ENCODE measurements at regions of chr17 and their contacts with region 1.

Region 1: DNA sequence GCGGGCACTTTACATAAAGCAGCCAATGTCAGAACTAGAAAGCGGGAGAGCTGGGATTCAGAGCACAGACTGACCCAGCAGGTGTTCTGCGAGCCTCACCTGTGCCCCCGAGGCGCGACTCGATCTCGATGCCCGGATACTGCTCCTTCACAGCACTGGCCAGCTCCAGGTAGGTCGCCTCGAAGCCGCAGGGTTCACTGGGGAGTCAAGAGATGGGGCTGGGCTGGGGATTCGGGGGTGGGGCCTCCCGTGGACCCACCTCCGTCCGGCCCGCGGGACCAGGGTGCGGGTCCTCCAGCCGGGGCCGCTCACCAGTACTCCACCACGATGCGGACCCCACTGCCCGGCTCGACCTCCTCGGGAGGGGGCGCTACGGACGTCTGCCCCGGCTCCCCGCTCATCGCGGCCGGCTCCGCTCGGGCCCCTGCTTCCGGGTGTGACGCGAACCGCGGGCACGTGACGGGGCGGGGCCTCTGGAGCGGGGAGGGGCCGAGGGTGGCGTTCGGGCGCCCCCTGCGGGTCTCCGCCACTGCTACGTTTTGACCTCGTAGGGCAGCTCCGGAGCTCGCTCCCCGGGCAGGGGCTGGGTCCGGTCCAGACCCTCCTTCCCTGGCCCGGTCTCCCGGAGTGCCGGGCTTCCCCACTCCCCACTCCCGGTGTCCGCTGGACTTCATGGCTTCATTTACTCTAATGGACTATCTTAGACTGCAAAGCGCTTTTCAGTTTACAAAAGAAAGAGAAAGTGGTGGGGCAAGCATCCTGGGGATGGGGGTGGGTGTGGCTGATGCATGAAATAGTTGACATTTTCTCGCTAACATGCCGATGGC is at the start of gene MIEN1:
- DNase-seq: peak; percentile 95
- H3K4me3 Mint-ChIP-seq: peak within 1 kb of the TSS; percentile 88
- H3K27ac Mint-ChIP-seq: peak within 1 kb of the TSS; percentile 83
- H3K4me1 Mint-ChIP-seq: peaks cover 19% of the 10 kb centered on the region
- H3K27me3 Mint-ChIP-seq: peaks cover 5% of the 10 kb centered on the region
- total RNA-seq, gene MIEN1: 40.1 to 45.1 TPM

Region 2: GRCh38 chr17:39533899-39534298 is 196.4 kb before region 1 on chr17:
- CTCF ChIA-PET with region 1: no interaction called
- POLR2A ChIA-PET with region 1: no interaction called
- DNase-seq: no peak
- H3K4me3 Mint-ChIP-seq: no peak overlapping the region
- H3K27ac Mint-ChIP-seq: no peak overlapping the region
- H3K4me1 Mint-ChIP-seq: peaks cover 20% of the 10 kb centered on the region
- H3K27me3 Mint-ChIP-seq: no peaks in the 10 kb centered on the region

Region 3: GRCh38 chr17:39606434-39607056 is 123.8 kb before region 1 on chr17:
- CTCF ChIA-PET with region 1: no interaction called
- POLR2A ChIA-PET with region 1: no interaction called
- DNase-seq: no peak
- H3K4me3 Mint-ChIP-seq: no peak overlapping the region
- H3K27ac Mint-ChIP-seq: no peak overlapping the region
- H3K4me1 Mint-ChIP-seq: peaks cover 12% of the 10 kb centered on the region
- H3K27me3 Mint-ChIP-seq: peaks cover 72% of the 10 kb centered on the region

Region 4: GRCh38 chr17:39653662-39654331 is 76.5 kb before region 1 on chr17:
- CTCF ChIA-PET with region 1: interaction called, 15 read pairs
- POLR2A ChIA-PET with region 1: interaction called, 10 read pairs
- DNase-seq: peak; percentile 85
- H3K4me3 Mint-ChIP-seq: no peak overlapping the region
- H3K27ac Mint-ChIP-seq: no peak overlapping the region
- H3K4me1 Mint-ChIP-seq: peaks cover 17% of the 10 kb centered on the region
- H3K27me3 Mint-ChIP-seq: no peaks in the 10 kb centered on the region

Region 5: GRCh38 chr17:39676198-39676819 is 54.0 kb before region 1 on chr17:
- CTCF ChIA-PET with region 1: interaction called, 10 read pairs
- POLR2A ChIA-PET with region 1: interaction called, 16 read pairs
- DNase-seq: peak; percentile 74
- H3K4me3 Mint-ChIP-seq: no peak overlapping the region
- H3K27ac Mint-ChIP-seq: peak overlapping the region; percentile 77
- H3K4me1 Mint-ChIP-seq: peaks cover 58% of the 10 kb centered on the region
- H3K27me3 Mint-ChIP-seq: peaks cover 2% of the 10 kb centered on the region

Region 6: DNA sequence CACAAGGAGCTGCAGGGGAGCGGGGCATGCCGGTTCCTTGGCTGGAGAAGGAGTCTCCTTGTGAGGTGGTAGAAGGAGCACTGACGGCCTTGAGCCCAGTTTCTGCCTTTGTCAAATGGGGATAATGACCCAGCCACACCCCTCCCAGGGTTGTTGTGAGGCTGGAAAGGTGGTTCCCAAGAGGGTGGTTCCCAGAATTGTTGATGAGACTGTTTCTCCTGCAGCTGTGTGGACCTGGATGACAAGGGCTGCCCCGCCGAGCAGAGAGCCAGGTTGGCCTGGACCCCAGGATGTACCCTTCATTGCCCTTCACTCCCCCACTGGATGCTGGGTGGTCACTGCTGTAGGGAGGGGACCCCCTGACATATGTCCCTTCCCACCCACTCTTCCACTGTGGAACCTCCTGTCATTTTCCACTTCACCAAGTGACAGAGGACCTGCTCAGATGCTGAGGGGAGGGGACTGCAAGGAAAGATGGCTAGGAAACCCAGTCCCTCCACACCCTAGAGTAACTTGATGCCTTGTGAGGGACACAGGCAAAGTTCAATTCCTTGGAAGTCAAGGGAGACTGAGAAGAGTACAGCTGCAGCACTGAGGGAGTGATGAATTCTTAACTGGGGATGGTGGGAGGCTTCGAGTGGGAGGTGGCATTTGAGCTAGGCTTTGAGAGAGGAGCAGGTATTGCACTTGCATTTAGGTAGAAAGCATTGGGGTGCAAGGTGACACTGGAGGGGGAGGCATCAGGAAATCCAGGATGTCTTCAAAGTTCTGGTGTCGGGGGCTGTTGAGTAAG is 10.5 kb before region 1 on chr17:
- CTCF ChIA-PET with region 1: interaction called, 13 read pairs
- POLR2A ChIA-PET with region 1: interaction called, 4 read pairs
- DNase-seq: no peak
- H3K4me3 Mint-ChIP-seq: no peak overlapping the region
- H3K27ac Mint-ChIP-seq: no peak overlapping the region
- H3K4me1 Mint-ChIP-seq: no peaks in the 10 kb centered on the region
- H3K27me3 Mint-ChIP-seq: no peaks in the 10 kb centered on the region

Region 7: DNA sequence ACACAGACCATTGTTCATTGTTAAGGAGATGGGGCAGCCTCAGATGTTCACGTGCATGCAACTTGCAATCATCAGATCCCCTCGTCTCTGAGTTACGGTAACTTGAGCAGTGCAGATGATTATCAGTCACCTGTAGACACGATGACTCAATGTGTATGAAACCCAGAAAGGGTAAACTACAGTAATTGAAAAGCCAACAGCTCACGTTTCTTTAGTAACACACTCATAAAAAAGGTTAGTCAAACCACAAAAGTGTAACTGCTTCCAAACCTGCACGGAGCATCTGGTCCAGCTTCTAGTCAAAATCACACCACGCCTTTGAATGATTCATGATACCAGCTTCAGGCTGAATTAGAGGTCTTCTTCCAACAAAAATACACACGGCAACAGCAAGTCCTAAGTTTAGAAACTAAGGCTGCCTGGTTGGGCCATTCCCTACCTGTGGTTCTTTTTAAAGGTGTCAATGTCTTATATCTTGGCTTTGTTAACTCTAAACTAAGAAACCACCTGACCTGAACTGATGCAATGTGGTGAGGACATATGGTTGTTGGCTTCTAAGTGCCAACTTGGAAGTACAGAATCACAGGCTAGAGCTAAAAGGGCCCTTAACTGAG is 39.8 kb after region 1 on chr17:
- CTCF ChIA-PET with region 1: interaction called, 7 read pairs
- POLR2A ChIA-PET with region 1: interaction called, 10 read pairs
- DNase-seq: peak; percentile 70
- H3K4me3 Mint-ChIP-seq: peak overlapping the region; percentile 9
- H3K27ac Mint-ChIP-seq: peak overlapping the region; percentile 87
- H3K4me1 Mint-ChIP-seq: peaks cover 90% of the 10 kb centered on the region
- H3K27me3 Mint-ChIP-seq: no peaks in the 10 kb centered on the region